ENCODE measurements at regions of chr6 and their contacts with region 1.

Region 1: DNA sequence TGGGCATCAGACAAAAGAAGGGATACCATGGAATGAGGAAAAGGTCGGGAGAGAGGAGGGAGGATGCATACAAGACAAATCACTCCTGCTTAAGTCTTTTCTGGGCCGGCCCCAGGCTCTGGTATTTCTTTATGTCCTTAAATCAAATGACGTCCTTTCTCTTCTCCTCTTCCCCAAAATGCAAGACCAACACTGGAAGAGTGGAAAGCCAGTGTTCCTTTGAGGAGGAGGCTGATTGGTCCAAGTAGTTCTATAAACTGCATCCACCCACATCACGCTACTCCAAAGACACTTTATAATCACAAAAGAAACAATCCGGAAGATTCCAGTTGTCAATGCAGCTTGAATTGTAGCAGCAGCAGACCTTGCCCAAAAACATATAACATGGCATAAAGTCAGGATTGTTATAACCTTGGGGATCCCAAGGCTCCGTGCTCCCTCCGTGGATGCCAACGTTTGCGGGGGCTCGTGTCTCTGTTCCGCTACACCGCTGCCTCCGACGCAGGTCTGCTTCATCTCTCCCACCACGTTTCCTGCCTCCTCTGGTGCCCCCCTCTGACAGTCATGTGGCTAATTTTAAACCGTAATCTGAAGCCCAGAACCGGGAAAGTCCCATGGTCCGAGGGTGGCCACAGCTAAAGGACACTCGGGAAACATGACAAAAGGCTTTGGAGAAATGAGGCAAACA is 47.1 kb downstream of the MCUR1 start:
- DNase-seq: peak; percentile 89
- H3K4me3 ChIP-seq: peak overlapping the region; percentile 10 to 45 (median 42)
- H3K27ac ChIP-seq: peak overlapping the region; percentile 46 to 79 (median 76)
- H3K4me1 ChIP-seq: peaks cover 0 to 34% (median 27%) of the 10 kb centered on the region in 4 donors
- H3K27me3 ChIP-seq: no peaks in the 10 kb centered on the region
- CTCF ChIP-seq: no peak
- EP300 ChIP-seq: peak in 2 of 4 donors; percentile 29 to 44
- POLR2A ChIP-seq: peak in 1 of 2 donors; percentile 18

Region 2: GRCh38 chr6:13733178-13733887 is 33.9 kb before region 1 on chr6:
- intact Hi-C with region 1: loop called (anchors 1 kb)
- DNase-seq: peak; percentile 98
- H3K4me3 ChIP-seq: peak overlapping the region in 3 of 4 donors; percentile 17 to 29 (median 25)
- H3K27ac ChIP-seq: peak overlapping the region; percentile 31 to 78 (median 74)
- H3K4me1 ChIP-seq: peaks cover 0 to 25% (median 17%) of the 10 kb centered on the region in 4 donors
- H3K27me3 ChIP-seq: no peaks in the 10 kb centered on the region
- CTCF ChIP-seq: no peak
- EP300 ChIP-seq: peak in 3 of 4 donors; percentile 88 to 94 (median 88)
- POLR2A ChIP-seq: no peak

Measured in sigmoid colon (tissue), 7 donors.